Activated T-helper 1 cell treated with anti-CD3 and anti-CD28 coated beads, Interleukin-12 subunit alpha, Interleukin-12 subunit beta, Interleukin-2, Interleukin-4 antibody, amounts not matched to agents 30 ng/mL and 10 ng/mL and 1 ng/mL, durations not matched to agents 14 hours and 24 hours and 36 hours (primary cell): ENCODE measurements at regions of chr15 and their contacts with region 1.

Region 1: DNA sequence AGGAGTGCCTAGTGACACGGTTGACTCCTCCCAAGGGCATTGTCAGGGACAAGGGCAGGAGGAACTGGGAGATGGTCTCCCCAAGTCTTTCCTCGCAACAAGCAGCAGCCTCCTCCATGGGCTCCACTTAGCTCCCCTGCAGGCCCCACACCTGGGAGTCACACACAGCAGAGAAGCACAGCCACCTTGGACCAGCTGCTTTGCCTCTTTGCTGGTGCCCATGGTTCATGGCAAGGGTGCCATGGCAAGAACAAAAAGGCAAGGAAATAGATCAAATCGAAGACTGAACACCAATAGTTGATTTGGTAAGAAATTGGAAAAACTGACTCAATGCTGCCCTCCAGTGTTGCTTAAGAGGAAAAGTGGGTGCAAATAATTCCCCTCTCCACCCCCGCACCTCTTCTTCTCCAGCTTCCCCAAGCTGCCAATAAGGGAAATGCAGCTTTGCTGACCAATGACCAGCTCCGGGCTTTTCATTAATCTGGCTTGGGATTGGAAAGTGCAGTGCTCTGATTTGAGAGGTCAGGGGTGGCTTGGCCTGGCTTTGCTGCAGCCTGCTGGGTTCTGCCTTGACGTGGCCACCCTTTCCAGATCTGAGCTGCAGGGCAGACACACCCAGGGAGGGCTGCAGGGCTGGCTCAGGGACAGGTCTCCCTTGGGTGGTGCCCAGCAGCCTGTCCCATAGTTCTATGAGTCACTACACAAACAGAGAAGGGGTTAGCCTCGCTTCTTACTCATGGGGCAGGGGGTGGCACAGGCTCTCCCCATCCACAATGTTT is 162.0 kb downstream of the KLF13 start:
- DNase-seq: peak; percentile 29
- H3K4me3 Mint-ChIP-seq: peak overlapping the region; percentile 40
- H3K27ac Mint-ChIP-seq: peak overlapping the region; percentile 76
- H3K4me1 Mint-ChIP-seq: peaks cover 75% of the 10 kb centered on the region
- H3K27me3 Mint-ChIP-seq: no peaks in the 10 kb centered on the region

Region 2: GRCh38 chr15:31200735-31201151 is 287.9 kb before region 1 on chr15:
- intact Hi-C with region 1: loop called (anchors 5 kb)
- DNase-seq: peak; percentile 57
- H3K4me3 Mint-ChIP-seq: no peak overlapping the region
- H3K27ac Mint-ChIP-seq: no peak overlapping the region
- H3K4me1 Mint-ChIP-seq: peaks cover 50% of the 10 kb centered on the region
- H3K27me3 Mint-ChIP-seq: peaks cover 14% of the 10 kb centered on the region

Region 3: DNA sequence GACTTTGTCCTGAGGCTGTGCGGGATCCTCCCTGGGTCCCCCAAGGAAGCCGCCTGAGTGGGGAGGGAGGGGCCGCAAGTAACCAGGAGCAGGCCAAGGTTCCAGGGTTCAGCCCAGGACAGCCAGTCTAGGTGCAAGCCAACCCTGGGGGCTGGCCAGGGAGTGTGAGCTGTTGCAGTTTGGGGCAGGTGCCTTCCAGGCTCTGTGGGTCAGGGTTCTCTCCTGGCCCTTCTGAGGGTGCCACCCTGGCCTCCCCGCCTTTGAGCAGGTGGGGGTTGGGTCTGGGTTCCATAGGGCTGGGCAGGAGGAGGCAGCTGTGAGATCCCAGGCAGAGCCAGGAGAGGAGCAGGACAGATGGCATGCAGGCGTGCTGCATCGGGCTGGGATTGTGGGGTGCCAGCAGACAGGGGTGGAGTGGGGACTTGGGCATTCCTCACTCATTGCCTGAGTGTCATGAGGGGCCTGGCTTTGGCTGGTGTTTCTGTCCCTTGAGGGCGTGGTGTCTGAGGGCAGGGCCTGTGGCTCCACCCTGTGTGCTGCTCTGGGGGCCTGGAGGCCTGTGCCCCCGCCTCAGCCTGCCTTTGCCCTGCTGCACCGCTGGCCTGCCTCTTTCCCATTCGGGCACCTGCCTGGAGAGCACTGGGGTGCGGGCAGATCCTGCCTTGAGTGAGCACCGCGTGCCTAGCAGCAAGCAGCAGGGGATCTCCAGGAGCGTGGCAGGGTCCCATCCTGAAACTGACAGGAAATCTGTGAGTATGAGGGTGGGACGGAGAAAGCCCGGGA is 143.6 kb before region 1 on chr15:
- intact Hi-C with region 1: loop called (anchors 1 kb)
- DNase-seq: no peak
- H3K4me3 Mint-ChIP-seq: peak overlapping the region; percentile 89
- H3K27ac Mint-ChIP-seq: peak overlapping the region; percentile 99
- H3K4me1 Mint-ChIP-seq: peaks cover 94% of the 10 kb centered on the region
- H3K27me3 Mint-ChIP-seq: no peaks in the 10 kb centered on the region

Region 4: GRCh38 chr15:31391687-31392671 is 96.6 kb before region 1 on chr15:
- intact Hi-C with region 1: loop called (anchors 1 kb)
- DNase-seq: peak; percentile 78
- H3K4me3 Mint-ChIP-seq: peak overlapping the region; percentile 86
- H3K27ac Mint-ChIP-seq: peak overlapping the region; percentile 90
- H3K4me1 Mint-ChIP-seq: peaks cover 37% of the 10 kb centered on the region
- H3K27me3 Mint-ChIP-seq: no peaks in the 10 kb centered on the region

Region 5: DNA sequence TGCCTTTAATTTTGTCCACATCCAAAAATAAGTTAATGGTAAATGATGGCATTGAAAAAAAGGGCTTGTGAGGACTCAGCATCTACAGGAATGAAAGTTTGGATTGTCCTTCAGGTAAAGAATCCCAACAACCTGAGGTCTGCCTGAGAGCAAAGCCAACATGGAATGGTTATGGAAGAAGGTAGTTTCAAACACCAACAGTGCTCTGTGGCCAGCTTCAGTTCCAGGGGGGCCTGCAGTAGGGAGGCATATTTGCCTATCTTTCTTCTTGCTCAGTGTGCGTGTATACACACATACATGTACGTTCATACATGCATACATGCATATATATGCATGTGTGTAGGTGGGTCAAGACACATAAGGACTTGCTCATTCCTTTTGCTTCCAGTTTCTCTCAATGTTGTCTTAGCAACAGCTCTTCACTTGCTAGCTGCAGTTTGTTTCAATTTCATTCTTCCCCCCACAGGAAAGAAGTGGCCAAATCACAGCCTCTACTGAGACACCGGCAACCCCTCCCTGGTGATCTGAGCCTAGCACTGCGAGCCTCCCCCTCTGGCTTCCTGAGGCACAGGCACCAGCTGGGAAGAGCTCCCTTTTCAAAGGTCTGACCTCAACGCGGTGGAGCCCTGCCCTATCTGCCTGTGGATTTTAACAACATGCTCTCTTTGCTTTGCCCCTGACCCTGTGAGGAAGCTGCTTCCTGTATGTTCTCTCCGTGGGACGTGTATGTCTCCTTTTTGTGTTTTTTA is 15.8 kb before region 1 on chr15:
- intact Hi-C with region 1: loop called (anchors 1 kb)
- DNase-seq: peak; percentile 68
- H3K4me3 Mint-ChIP-seq: peak overlapping the region; percentile 76
- H3K27ac Mint-ChIP-seq: peak overlapping the region; percentile 90
- H3K4me1 Mint-ChIP-seq: peaks cover 59% of the 10 kb centered on the region
- H3K27me3 Mint-ChIP-seq: no peaks in the 10 kb centered on the region

Region 6: GRCh38 chr15:31526916-31527690 is 38.5 kb after region 1 on chr15:
- intact Hi-C with region 1: no loop called
- DNase-seq: no peak
- H3K4me3 Mint-ChIP-seq: no peak overlapping the region
- H3K27ac Mint-ChIP-seq: no peak overlapping the region
- H3K4me1 Mint-ChIP-seq: no peaks in the 10 kb centered on the region
- H3K27me3 Mint-ChIP-seq: peaks cover 17% of the 10 kb centered on the region